ENCODE measurements at regions of chr3 and their contacts with region 1.

Region 1: GRCh38 chr3:11096266-11097135 is 57.8 kb upstream of the HRH1 start:
- DNase-seq: peak; percentile 54 to 91
- H3K4me3 ChIP-seq: peak overlapping the region; percentile 39 to 51
- H3K27ac ChIP-seq: peak overlapping the region; percentile 82 to 84
- H3K4me1 ChIP-seq: peaks cover 0 to 4% of the 10 kb centered on the region in 2 donors
- H3K27me3 ChIP-seq: no peaks in the 10 kb centered on the region
- CTCF ChIP-seq: no peak

Region 2: GRCh38 chr3:11120091-11120805 is 23.7 kb after region 1 on chr3:
- intact Hi-C with region 1: loop called (anchors 2 kb)
- DNase-seq: no peak
- H3K4me3 ChIP-seq: no peak overlapping the region
- H3K27ac ChIP-seq: peak overlapping the region; percentile 84 to 90
- H3K4me1 ChIP-seq: peaks cover 0 to 8% of the 10 kb centered on the region in 2 donors
- H3K27me3 ChIP-seq: no peaks in the 10 kb centered on the region
- CTCF ChIP-seq: no peak

Region 3: DNA sequence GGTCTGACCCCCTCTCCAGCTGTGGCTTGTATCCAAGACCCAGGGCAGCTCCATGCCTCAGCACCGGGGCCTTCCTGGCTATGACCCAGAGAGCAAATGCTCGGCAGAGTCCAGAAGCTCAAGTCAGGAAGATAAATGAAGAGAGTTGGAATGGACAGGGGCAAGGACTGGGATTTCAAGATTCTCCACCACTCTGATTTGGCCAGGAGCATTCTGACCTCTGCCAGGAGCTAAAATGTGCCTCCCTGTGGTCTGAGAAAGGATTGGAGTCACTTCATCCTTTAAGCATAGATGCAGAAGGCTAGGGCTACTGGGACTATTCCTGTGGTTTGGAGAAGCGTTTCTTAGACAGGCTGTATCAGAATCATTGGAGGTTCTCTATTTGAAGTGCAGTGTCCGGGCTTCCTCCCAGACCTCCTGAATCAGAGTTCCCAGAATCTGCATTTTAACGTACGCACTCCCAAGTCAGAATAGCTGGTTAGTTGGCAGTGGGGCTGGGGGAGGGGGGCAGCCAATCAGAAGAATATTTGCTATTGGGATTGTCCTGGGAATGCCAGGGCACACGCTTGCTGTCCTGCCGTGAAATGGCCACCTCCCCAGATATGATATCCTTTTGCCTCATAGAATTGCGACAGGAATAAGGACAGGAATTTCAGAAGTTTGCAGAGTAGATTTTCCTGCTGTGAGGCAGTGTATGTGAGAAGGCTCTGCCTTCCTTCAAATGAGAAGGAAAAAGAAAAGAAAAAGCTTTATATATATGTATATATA is 115.2 kb after region 1 on chr3:
- intact Hi-C with region 1: loop called (anchors 5 kb)
- DNase-seq: peak in 1 of 2 donors; percentile 71
- H3K4me3 ChIP-seq: peak overlapping the region in 1 of 2 donors; percentile 26
- H3K27ac ChIP-seq: peak overlapping the region; percentile 85 to 86
- H3K4me1 ChIP-seq: peaks cover 9 to 46% of the 10 kb centered on the region in 2 donors
- H3K27me3 ChIP-seq: no peaks in the 10 kb centered on the region
- CTCF ChIP-seq: peak in 1 of 3 experiments; percentile 38